Panc1 (cell line): ENCODE measurements at regions of chr12 and their contacts with region 1.

Region 1: GRCh38 chr12:127108360-127109215 is 1158.4 kb upstream of the TMEM132C start:
- DNase-seq: no peak
- ATAC-seq: peak; percentile 77
- H3K4me3 ChIP-seq: no peak overlapping the region
- H3K27ac ChIP-seq: no peak overlapping the region
- H3K4me1 ChIP-seq: no peaks in the 10 kb centered on the region
- H3K27me3 ChIP-seq: no peaks in the 10 kb centered on the region
- CTCF ChIP-seq: peak; percentile 71

Region 2: GRCh38 chr12:127078577-127079350 is 29.8 kb before region 1 on chr12:
- CTCF ChIA-PET with region 1: no interaction called
- POLR2A ChIA-PET with region 1: no interaction called
- in situ Hi-C with region 1: no loop called
- intact Hi-C with region 1: no loop called
- DNase-seq: no peak
- ATAC-seq: no peak
- H3K4me3 ChIP-seq: no peak overlapping the region
- H3K27ac ChIP-seq: no peak overlapping the region
- H3K4me1 ChIP-seq: no peaks in the 10 kb centered on the region
- H3K27me3 ChIP-seq: no peaks in the 10 kb centered on the region
- CTCF ChIP-seq: no peak

Region 3: DNA sequence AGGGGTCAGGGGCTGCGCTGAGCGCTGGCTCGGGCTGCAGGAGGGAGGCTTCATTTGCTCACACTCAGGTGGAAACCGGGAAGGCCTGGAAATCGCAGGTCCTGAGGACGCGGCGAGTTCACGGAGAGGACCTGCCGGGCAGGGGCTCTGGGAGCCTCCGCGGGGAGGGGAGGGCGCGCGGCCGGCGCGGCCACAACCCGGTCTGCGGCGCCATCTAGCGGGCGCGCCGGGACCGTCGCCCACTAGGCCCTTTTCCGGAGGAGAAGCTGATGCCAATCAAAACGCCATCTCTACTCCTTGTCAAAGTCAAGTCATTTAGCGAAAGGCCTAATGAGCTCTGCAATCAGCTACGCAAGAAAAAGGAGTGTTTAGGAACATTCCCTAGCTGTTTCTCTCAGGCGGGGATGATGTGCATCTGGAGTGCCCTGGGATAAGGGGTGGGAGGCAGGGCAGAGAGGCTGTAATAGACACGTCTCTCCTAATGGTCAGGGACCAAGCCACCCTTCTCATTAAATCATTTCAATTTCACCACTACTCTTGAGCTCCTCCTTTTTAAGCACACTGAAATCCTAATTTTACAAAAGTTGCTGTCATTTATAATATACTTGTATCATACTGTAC is 272.6 kb after region 1 on chr12:
- CTCF ChIA-PET with region 1: no interaction called
- POLR2A ChIA-PET with region 1: no interaction called
- in situ Hi-C with region 1: no loop called
- intact Hi-C with region 1: loop called (anchors 5 kb)
- DNase-seq: no peak
- ATAC-seq: peak; percentile 92
- H3K4me3 ChIP-seq: peak overlapping the region in 1 of 2 experiments; percentile 19; a peak in 1 of 4 replicates
- H3K27ac ChIP-seq: no peak overlapping the region
- H3K4me1 ChIP-seq: no peaks in the 10 kb centered on the region
- H3K27me3 ChIP-seq: no peaks in the 10 kb centered on the region
- CTCF ChIP-seq: peak; percentile 93